ENCODE measurements at regions of chr2 and their contacts with region 1.

Region 1: GRCh38 chr2:44981136-44982108 is 27.8 kb downstream of the SIX2 start:
- DNase-seq: peak in 3 of 4 donors; percentile 71 to 89 (median 82)
- ATAC-seq: peak; percentile 89
- H3K4me3 ChIP-seq: no peak overlapping the region
- H3K27ac ChIP-seq: no peak overlapping the region
- H3K4me1 ChIP-seq: no peaks in the 10 kb centered on the region
- H3K27me3 ChIP-seq: peaks cover 0 to 56% of the 10 kb centered on the region in 2 donors
- CTCF ChIP-seq: peak; percentile 73 to 87

Region 2: DNA sequence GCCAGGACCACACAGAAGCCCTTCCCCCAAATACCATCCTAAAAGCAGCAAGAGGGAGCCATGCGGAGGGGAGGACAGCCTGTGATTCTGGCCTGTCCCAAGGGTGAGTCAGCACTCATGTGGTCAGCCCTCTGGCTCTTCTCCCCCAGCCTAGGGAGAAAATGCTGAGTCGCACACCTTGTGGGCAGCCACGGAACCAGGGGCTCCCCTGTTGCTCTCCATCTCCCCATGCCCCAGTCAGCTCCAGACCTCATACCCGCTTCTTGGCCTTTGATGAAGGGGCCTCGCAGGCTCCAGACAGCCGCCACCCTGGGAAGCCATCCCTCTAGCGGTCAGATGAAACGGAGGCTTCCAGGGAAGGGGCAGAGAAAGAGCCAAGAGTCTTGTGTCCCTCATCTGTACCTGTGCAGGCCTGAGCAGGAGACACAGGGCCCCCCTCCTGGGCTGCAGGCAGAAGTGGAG is 209.1 kb after region 1 on chr2:
- intact Hi-C with region 1: no loop called
- DNase-seq: no peak
- ATAC-seq: peak; percentile 48
- H3K4me3 ChIP-seq: no peak overlapping the region
- H3K27ac ChIP-seq: peak overlapping the region in 1 of 2 donors; percentile 39
- H3K4me1 ChIP-seq: no peaks in the 10 kb centered on the region
- H3K27me3 ChIP-seq: peaks cover 0 to 7% of the 10 kb centered on the region in 2 donors
- CTCF ChIP-seq: no peak

Region 3: GRCh38 chr2:45494269-45494977 is 513.0 kb after region 1 on chr2:
- intact Hi-C with region 1: loop called in 1 of 2 experiments (anchors 5 kb)
- DNase-seq: peak in 2 of 4 donors; percentile 64 to 76
- ATAC-seq: peak; percentile 78
- H3K4me3 ChIP-seq: no peak overlapping the region
- H3K27ac ChIP-seq: no peak overlapping the region
- H3K4me1 ChIP-seq: peaks cover 0 to 4% of the 10 kb centered on the region in 2 donors
- H3K27me3 ChIP-seq: no peaks in the 10 kb centered on the region
- CTCF ChIP-seq: peak; percentile 63 to 79

Measured in left lung (tissue), 14 donors.